ENCODE measurements at regions of chr16 and their contacts with region 1.

Region 1: GRCh38 chr16:66521951-66522771 is 27.8 kb downstream of the TK2 start:
- DNase-seq: peak; percentile 62
- ATAC-seq: peak; percentile 33
- H3K4me3 Mint-ChIP-seq: peak overlapping the region; percentile 69
- H3K27ac Mint-ChIP-seq: peak overlapping the region; percentile 93
- H3K4me1 Mint-ChIP-seq: peaks cover 97% of the 10 kb centered on the region
- H3K27me3 Mint-ChIP-seq: no peaks in the 10 kb centered on the region
- CTCF ChIP-seq: no peak

Region 2: DNA sequence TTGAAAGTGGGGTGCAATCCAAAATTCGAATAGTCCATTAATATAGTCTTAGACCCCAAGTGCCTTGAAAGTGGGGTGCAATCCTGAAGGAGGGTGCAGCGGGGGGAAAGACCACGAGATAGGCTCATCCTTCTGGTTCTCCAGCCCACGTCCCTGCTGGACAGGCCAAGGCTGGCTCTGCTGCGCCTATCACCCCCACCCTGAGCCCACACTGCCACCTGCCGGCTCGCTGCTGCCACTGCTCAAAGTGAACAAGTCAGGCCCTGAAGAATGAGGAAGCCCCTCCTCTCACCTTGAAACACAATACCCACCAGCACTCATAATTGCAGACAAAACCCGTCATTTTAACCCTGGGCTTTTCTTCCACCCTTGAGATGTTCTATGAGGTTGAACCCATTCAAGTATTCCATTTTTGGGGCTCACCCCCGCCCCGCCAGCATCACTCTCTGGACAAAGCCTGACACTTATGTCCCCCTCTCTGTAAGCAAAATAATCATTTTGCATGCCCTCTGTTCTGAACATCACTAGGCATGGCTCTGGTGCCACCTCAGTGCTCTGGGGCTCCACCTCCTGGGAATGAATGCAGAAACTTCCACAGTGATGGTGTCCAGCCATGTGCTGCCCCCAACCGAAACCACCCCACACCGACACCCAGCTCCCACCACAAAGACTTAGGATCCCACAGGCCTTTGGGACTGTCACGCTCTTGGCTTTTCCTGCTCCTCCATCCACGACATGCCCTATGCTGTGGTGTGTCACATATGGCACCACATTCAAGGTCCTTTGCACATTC is 38.3 kb before region 1 on chr16:
- CTCF ChIA-PET with region 1: interaction called, 3 read pairs
- POLR2A ChIA-PET with region 1: no interaction called
- intact Hi-C with region 1: loop called (anchors 2 kb)
- DNase-seq: peak; percentile 69
- ATAC-seq: peak; percentile 94
- H3K4me3 Mint-ChIP-seq: no peak overlapping the region
- H3K27ac Mint-ChIP-seq: no peak overlapping the region
- H3K4me1 Mint-ChIP-seq: peaks cover 15% of the 10 kb centered on the region
- H3K27me3 Mint-ChIP-seq: no peaks in the 10 kb centered on the region
- CTCF ChIP-seq: peak; percentile 66

Region 3: DNA sequence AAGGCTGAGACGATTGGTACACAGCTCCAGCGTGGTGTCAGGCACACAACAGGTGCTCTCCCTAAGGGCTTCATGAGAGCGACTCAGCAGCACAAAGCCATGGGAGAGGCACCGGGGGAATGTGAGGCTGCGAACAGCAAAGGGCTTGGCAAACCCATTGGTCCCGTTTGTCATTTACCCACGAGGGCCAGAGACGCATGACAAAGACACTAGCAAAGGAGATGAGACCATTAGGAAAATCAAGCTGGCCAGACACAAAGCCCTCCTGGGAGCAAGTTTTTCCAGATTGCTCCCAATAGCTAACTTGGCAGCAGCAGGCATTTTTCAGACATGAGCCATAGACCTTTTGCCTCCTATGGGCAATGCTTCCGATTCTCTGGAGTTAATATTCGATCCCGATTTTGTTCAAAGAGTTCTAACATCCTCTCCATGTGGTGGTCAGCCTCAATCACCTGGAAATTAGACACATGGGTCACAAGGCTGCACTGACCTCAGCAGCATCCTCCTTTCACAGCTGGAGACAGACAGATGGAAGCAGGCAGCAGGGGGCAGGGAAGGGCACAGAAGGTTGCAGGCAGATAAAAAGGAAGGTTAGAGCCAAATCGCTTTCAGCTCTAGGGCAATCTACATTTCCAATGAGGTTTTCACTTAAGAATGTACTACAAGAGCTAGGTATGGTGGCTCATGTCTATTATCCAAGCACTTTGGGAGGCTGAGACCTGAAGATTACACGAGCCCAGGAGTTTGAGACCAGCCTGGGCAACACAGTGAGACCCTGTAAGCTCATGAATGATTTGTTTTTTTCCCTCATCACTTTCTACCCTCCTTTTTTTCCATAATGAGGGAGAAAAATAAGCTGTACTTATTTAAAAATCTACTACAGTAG is 10.3 kb before region 1 on chr16:
- CTCF ChIA-PET with region 1: interaction called, 4 read pairs
- POLR2A ChIA-PET with region 1: interaction called, 6 read pairs
- intact Hi-C with region 1: loop called (anchors 1 kb)
- DNase-seq: no peak
- ATAC-seq: no peak
- H3K4me3 Mint-ChIP-seq: no peak overlapping the region
- H3K27ac Mint-ChIP-seq: no peak overlapping the region
- H3K4me1 Mint-ChIP-seq: peaks cover 34% of the 10 kb centered on the region
- H3K27me3 Mint-ChIP-seq: no peaks in the 10 kb centered on the region
- CTCF ChIP-seq: no peak

Region 4: DNA sequence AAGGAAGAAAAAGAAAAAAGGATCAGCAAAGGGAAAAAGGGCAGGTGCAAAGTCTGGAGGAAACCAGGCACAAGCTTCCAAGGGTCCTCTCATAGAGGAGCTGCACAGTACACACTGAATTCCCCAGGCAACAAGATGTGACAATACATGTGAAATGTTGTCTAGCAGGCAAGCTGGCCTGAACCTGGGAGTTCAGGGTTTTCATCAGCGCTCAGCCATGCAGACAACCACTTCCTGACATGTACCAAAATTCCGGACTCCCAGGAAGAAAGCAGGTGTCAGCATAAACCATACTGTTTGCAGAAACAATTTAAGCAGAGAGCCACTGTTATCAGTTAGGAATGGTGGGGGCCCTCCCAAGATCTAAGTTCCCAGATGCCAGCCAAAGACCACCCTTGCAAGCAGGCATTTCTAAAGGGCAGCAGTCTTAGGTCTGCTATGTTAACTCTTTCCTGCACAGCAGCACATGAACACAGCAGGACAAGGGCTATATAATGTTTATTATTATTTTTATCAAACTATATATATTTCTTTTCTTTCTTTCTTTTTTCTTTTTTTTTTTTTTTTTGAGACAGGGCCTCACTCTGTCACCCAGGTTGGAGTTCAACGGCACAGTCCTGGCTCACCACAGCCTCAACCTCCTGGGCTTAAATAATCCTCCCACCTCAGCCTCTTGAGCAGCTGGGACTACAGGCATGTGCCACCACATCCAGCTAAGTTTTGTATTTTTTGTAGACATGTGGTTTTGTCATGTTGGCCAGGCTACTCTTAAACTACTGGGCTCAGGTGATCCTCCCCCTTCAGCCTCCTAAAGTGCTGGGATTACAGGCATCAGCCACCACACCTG is 17.7 kb after region 1 on chr16:
- CTCF ChIA-PET with region 1: no interaction called
- POLR2A ChIA-PET with region 1: interaction called, 5 read pairs
- intact Hi-C with region 1: loop called (anchors 1 kb)
- DNase-seq: no peak
- ATAC-seq: peak; percentile 78
- H3K4me3 Mint-ChIP-seq: peak overlapping the region; percentile 65
- H3K27ac Mint-ChIP-seq: peak overlapping the region; percentile 43
- H3K4me1 Mint-ChIP-seq: peaks cover 55% of the 10 kb centered on the region
- H3K27me3 Mint-ChIP-seq: no peaks in the 10 kb centered on the region
- CTCF ChIP-seq: no peak

Region 5: GRCh38 chr16:66650707-66651473 is 128.7 kb after region 1 on chr16:
- CTCF ChIA-PET with region 1: no interaction called
- POLR2A ChIA-PET with region 1: no interaction called
- intact Hi-C with region 1: no loop called
- DNase-seq: peak; percentile 42
- ATAC-seq: peak; percentile 92
- H3K4me3 Mint-ChIP-seq: peak overlapping the region; percentile 66
- H3K27ac Mint-ChIP-seq: no peak overlapping the region
- H3K4me1 Mint-ChIP-seq: peaks cover 8% of the 10 kb centered on the region
- H3K27me3 Mint-ChIP-seq: peaks cover 25% of the 10 kb centered on the region
- CTCF ChIP-seq: peak; percentile 84

Region 6: GRCh38 chr16:66751303-66751991 is 229.3 kb after region 1 on chr16 and contains the start of gene DYNC1LI2:
- CTCF ChIA-PET with region 1: no interaction called
- POLR2A ChIA-PET with region 1: no interaction called
- intact Hi-C with region 1: loop called (anchors 2 kb)
- DNase-seq: peak; percentile 92
- ATAC-seq: peak; percentile 96
- H3K4me3 Mint-ChIP-seq: peak within 1 kb of the TSS; percentile 88
- H3K27ac Mint-ChIP-seq: peak within 1 kb of the TSS; percentile 87
- H3K4me1 Mint-ChIP-seq: peaks cover 34% of the 10 kb centered on the region
- H3K27me3 Mint-ChIP-seq: peaks cover 7% of the 10 kb centered on the region
- CTCF ChIP-seq: no peak
- total RNA-seq, gene DYNC1LI2: 64.3 and 84.4 TPM in 2 replicates

Region 7: DNA sequence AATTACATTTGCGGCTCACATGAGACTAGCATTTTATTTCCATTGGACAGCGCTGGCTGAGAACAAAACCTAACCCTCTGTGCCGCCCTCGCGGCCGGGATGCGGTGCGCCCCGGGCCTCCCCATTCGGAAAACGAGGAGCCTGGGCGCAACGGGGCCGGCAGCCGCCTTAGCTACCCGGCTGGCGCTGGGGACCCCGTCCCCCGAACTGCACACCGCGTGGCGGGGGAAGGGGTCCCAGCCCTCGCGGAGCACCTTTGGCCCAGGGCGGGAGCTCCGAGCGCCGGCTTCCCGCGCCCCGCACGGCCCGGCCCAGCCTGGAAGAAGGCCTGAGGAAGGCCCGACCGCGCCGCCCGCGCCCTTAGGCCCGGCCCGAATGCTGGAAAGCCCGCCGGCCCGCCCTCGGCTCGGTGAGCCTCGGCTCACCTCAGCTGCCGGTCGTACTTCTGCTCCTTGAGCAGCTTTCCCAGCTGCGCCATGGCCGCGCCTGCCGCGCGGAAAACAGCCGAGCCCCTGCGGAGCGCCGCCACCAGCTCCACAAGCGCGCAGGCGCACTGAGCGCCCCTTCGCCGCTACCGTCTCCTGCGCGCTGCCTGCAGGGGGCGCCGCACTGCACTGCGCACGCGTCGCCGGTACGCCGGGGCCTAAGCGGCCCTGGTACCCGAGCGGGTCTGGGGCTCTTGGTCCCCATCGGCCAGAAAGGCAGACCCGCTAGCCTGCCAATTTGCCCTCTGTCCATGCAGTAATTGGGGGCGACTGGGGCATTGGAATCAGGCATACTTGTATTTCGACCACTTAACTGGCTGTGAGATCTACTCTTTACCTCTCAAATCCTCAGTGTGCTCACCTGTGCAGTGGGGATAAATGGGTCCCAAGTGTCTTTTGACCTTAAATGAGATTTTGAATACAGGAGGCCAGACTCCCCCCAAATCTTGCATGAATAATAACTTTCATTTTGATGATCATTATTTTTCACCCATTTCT is 308.6 kb after region 1 on chr16 and contains the start of gene NAE1:
- CTCF ChIA-PET with region 1: no interaction called
- POLR2A ChIA-PET with region 1: no interaction called
- intact Hi-C with region 1: no loop called
- DNase-seq: peak; percentile 94
- ATAC-seq: peak; percentile 98
- H3K4me3 Mint-ChIP-seq: peak within 1 kb of the TSS; percentile 78
- H3K27ac Mint-ChIP-seq: peak within 1 kb of the TSS; percentile 53
- H3K4me1 Mint-ChIP-seq: peaks cover 27% of the 10 kb centered on the region
- H3K27me3 Mint-ChIP-seq: no peaks in the 10 kb centered on the region
- CTCF ChIP-seq: peak; percentile 94
- total RNA-seq, gene NAE1: 53.7 and 54.1 TPM in 2 replicates